ENCODE measurements at regions of chr22 and their contacts with region 1.

Region 1: DNA sequence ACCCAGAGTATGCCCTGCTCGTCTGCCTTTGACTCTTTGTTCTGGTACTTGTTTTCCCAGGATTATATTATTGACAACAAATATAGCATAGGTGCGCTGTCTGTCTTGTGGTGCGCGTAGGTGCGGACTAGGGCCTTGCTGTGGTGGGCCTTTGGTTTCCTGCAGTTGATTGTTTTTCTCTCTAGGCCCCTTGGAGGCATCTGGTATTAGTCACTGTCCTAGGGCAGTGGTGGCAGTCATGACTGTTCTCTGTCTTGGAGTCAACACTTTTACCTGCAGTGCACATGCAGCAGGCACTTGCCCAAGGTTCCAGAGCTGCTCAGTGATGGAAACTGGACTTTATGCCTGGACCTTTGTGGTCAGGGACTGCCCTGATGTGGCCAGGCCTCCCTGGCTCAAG is 18.6 kb downstream of the PPP6R2 start:
- DNase-seq: no peak
- ATAC-seq: no peak
- H3K4me3 ChIP-seq: no peak overlapping the region
- H3K27ac ChIP-seq: no peak overlapping the region
- H3K4me1 ChIP-seq: no peaks in the 10 kb centered on the region
- H3K27me3 ChIP-seq: no peaks in the 10 kb centered on the region
- CTCF ChIP-seq: no peak

Region 2: DNA sequence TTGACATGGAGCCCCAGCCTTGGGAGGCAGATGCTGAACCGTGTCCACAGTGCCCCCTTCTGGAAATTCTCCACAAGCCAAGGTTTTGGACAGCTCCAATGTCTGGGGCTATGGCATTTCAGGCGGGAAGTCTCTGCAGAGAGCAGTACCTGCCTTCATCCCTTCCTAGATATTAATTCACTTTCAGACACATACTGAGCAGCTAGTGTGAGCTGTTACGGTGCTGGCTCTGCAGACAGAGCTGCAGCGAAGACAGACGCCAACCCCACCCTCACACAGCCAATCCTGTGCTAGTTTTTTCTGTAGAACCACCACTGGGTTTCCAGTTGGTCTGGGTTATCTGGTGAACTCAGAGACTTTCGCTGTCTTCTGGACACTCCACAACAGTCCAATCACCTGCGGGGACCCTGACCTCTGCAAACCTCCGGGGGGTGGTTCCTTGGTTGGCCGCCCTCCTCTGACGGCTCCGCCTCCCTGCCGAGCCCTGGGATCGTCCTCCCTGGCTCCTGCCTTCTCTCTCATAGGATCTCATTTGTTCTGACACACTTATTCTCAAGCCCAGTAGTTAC is 136.7 kb after region 1 on chr22:
- intact Hi-C with region 1: loop called in 1 of 2 experiments (anchors 5 kb)
- DNase-seq: no peak
- ATAC-seq: peak; percentile 52 to 74 (median 64)
- H3K4me3 ChIP-seq: no peak overlapping the region
- H3K27ac ChIP-seq: no peak overlapping the region
- H3K4me1 ChIP-seq: no peaks in the 10 kb centered on the region
- H3K27me3 ChIP-seq: no peaks in the 10 kb centered on the region
- CTCF ChIP-seq: peak; percentile 40

Region 3: GRCh38 chr22:50548913-50549790 is 187.5 kb after region 1 on chr22:
- intact Hi-C with region 1: no loop called
- DNase-seq: peak in 1 of 2 donors; percentile 47
- ATAC-seq: no peak
- H3K4me3 ChIP-seq: peak overlapping the region; percentile 30
- H3K27ac ChIP-seq: no peak overlapping the region
- H3K4me1 ChIP-seq: no peaks in the 10 kb centered on the region
- H3K27me3 ChIP-seq: peaks cover 0 to 66% (median 32%) of the 10 kb centered on the region in 3 donors
- CTCF ChIP-seq: no peak

Measured in psoas muscle (tissue), 8 donors.